Activated naive CD4-positive, alpha-beta T cell treated with anti-CD3 and anti-CD28 coated beads, Interleukin-2, amount 10 ng/mL, durations not matched to agents 7 days and 5 days (primary cell): ENCODE measurements at regions of chr12 and their contacts with region 1.

Region 1: DNA sequence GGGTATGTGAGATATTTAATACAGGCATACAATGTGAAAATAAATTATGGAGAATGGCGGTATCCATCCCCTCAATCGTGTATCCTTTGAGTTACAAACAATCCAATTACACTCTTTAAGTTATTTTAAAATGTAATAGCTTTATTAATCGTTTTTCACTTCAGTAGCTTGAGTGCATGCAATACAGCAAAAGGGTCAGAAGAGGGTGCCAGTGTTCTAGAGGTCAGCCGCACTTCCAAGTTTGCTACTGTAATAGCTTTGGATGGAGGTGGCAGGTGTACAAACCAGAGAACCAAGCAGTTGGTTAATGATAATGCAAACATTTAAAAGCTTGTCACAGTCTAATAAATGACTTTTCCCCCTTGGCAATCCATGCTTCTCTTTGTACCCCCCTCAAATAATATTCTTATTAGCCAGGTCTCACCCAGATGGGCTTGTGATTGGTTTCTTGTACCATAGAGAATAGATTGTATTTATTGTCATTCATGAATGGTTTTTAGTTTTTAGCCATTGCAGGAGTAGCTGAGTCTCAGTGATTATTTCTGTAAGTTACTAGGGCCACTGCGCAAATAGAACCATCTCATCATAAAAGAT is 127.0 kb downstream of the ERC1 start:
- DNase-seq: peak; percentile 81
- H3K4me3 Mint-ChIP-seq: no peak overlapping the region
- H3K27ac Mint-ChIP-seq: no peak overlapping the region
- H3K4me1 Mint-ChIP-seq: peaks cover 7% of the 10 kb centered on the region
- H3K27me3 Mint-ChIP-seq: no peaks in the 10 kb centered on the region

Region 2: DNA sequence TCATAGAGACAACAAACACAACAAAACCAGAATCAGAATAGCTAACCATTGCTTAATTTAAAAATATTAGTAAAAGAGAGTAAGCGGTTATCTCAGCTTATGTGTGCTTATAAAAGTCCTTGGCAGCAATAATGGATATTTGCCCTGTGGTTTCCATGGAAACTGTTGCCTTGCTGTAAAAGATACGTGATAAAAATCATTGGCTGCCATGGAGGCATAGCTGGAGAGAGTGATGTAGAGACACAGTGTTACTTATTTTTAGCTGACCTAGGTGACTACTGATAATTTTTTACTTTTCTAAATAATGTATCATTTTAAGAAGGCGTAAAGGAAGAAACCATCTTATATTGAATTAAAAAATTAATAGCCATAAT is 34.2 kb before region 1 on chr12:
- CTCF ChIA-PET with region 1: no interaction called
- DNase-seq: no peak
- H3K4me3 Mint-ChIP-seq: no peak overlapping the region
- H3K27ac Mint-ChIP-seq: no peak overlapping the region
- H3K4me1 Mint-ChIP-seq: no peaks in the 10 kb centered on the region
- H3K27me3 Mint-ChIP-seq: no peaks in the 10 kb centered on the region

Region 3: GRCh38 chr12:1130164-1130563 is 12.1 kb after region 1 on chr12:
- CTCF ChIA-PET with region 1: interaction called, 19 read pairs
- DNase-seq: no peak
- H3K4me3 Mint-ChIP-seq: no peak overlapping the region
- H3K27ac Mint-ChIP-seq: no peak overlapping the region
- H3K4me1 Mint-ChIP-seq: peaks cover 15% of the 10 kb centered on the region
- H3K27me3 Mint-ChIP-seq: no peaks in the 10 kb centered on the region

Region 4: GRCh38 chr12:1474041-1474573 is 356.0 kb after region 1 on chr12:
- CTCF ChIA-PET with region 1: interaction called, 12 read pairs
- DNase-seq: no peak
- H3K4me3 Mint-ChIP-seq: no peak overlapping the region
- H3K27ac Mint-ChIP-seq: no peak overlapping the region
- H3K4me1 Mint-ChIP-seq: no peaks in the 10 kb centered on the region
- H3K27me3 Mint-ChIP-seq: peaks cover 3% of the 10 kb centered on the region

Region 5: GRCh38 chr12:1583421-1584078 is 465.5 kb after region 1 on chr12:
- CTCF ChIA-PET with region 1: interaction called, 210 read pairs
- DNase-seq: peak; percentile 78
- H3K4me3 Mint-ChIP-seq: no peak overlapping the region
- H3K27ac Mint-ChIP-seq: no peak overlapping the region
- H3K4me1 Mint-ChIP-seq: peaks cover 17% of the 10 kb centered on the region
- H3K27me3 Mint-ChIP-seq: peaks cover 3% of the 10 kb centered on the region

Region 6: DNA sequence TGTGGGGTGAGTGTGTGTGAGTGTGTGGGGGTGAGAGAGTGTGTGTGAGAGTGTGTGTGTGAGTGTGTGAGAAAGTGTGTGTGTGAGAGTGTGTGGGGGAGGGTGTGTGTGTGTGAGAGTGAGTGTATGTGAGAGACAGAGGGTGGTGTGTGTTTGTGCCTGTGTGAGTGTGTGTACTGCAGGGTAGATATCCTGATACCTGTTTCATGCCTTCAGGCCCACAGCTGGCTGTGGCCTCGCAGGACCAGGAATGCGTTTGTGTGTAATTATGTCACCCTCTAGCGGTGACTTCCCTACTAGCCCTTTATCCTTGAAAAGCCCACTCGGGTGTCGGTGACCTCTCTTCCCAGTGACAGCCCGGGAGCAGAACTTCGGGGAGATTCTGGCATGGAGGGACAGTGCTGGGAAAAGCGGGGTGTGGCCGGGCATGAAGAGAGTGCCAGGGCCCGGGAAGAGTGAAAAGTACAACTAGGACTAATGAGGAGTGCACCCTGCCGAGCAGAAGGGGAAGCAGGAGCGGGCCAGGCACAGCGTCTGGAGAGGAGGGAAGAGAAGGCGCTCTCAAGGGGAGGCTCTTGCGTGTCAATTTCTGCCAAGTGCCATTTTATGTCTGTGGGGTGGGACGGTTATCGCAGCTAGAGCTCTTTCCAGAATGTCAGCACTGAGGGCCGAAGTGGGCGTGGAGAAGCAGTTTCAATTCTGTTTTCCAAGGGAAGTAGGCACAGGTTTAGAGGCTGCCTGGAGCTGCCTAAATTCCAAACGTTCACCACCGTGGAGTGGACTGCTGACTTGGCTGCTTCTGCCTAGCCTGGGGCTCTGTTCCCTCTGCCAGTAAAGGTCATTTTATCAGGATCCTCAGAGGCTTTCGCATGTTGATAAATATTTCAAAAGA is 487.3 kb after region 1 on chr12:
- CTCF ChIA-PET with region 1: interaction called, 30 read pairs
- DNase-seq: peak; percentile 69
- H3K4me3 Mint-ChIP-seq: peak overlapping the region; percentile 72
- H3K27ac Mint-ChIP-seq: no peak overlapping the region
- H3K4me1 Mint-ChIP-seq: peaks cover 37% of the 10 kb centered on the region
- H3K27me3 Mint-ChIP-seq: peaks cover 26% of the 10 kb centered on the region